ENCODE measurements at regions of chr1 and their contacts with region 1.

Region 1: GRCh38 chr1:204806943-204807687 is 63.5 kb upstream of the NFASC start:
- DNase-seq: peak; percentile 84 to 90 (median 89)
- ATAC-seq: peak; percentile 96 to 97 (median 97)
- H3K4me3 ChIP-seq: peak overlapping the region; percentile 39 to 54 (median 46)
- H3K27ac ChIP-seq: no peak overlapping the region
- H3K4me1 ChIP-seq: peaks cover 0 to 10% (median 0%) of the 10 kb centered on the region in 4 donors
- H3K27me3 ChIP-seq: no peaks in the 10 kb centered on the region
- CTCF ChIP-seq: peak; percentile 96 to 99 (median 98)
- POLR2A ChIP-seq: no peak

Region 2: GRCh38 chr1:204565617-204566582 is 241.2 kb before region 1 on chr1:
- intact Hi-C with region 1: loop called in 1 of 2 experiments (anchors 10 kb)
- DNase-seq: peak in 1 of 3 donors; percentile 26
- ATAC-seq: peak; percentile 78 to 95 (median 88)
- H3K4me3 ChIP-seq: no peak overlapping the region
- H3K27ac ChIP-seq: no peak overlapping the region
- H3K4me1 ChIP-seq: no peaks in the 10 kb centered on the region
- H3K27me3 ChIP-seq: no peaks in the 10 kb centered on the region
- CTCF ChIP-seq: peak; percentile 46 to 59 (median 54)
- POLR2A ChIP-seq: no peak

Region 3: GRCh38 chr1:204837440-204838084 is 30.4 kb after region 1 on chr1:
- intact Hi-C with region 1: no loop called
- DNase-seq: peak in 1 of 3 donors; percentile 21
- ATAC-seq: peak; percentile 47 to 65 (median 51)
- H3K4me3 ChIP-seq: no peak overlapping the region
- H3K27ac ChIP-seq: no peak overlapping the region
- H3K4me1 ChIP-seq: no peaks in the 10 kb centered on the region
- H3K27me3 ChIP-seq: no peaks in the 10 kb centered on the region
- CTCF ChIP-seq: no peak
- POLR2A ChIP-seq: no peak

Region 4: DNA sequence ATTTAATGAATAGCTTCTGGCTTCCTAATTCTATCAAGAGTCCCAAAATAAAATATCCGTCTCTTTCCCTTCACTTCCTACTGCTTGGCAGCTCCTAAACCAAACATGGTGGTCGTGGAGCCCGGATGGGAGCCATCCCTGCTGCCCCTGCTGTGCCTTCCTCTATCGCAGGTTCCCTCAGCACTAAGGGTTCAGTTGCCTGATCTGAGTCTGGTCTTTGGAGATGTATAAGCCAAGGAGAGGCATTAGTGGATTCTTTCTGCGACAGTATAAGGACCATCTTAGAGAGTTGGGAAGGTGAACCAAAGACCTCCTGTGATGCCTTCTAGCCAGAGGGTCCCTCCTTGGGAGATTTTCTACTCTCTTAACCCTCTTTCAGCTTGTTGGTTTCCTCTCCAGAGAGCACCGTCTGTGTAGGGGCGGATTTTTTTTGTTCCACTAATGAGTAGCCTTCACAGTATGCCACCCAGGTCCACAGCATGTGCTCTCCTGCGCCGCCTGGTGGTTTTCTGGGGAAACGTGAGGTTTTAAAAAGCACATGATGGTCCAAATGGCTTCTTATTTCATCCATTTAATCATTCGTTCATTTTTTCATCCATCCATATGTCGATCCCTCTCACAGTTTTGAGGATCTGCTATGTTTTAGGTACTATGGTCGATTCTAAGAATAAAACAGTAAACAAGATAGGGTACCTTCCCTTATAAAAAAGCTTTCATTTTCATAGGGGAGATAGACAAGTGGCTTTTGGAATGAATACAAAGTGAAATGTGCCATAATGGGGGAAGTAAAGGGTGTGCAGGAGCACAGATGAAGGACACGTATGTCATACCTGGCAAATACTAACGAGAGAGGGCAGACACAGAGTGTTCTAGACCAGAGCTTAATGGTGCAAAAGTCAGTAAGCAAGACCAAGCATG is 134.6 kb after region 1 on chr1:
- intact Hi-C with region 1: loop called in 1 of 2 experiments (anchors 10 kb)
- DNase-seq: peak; percentile 44 to 73 (median 65)
- ATAC-seq: peak; percentile 65 to 87 (median 82)
- H3K4me3 ChIP-seq: no peak overlapping the region
- H3K27ac ChIP-seq: no peak overlapping the region
- H3K4me1 ChIP-seq: no peaks in the 10 kb centered on the region
- H3K27me3 ChIP-seq: no peaks in the 10 kb centered on the region
- CTCF ChIP-seq: peak; percentile 84 to 86 (median 86)
- POLR2A ChIP-seq: no peak